Activated naive CD4-positive, alpha-beta T cell treated with anti-CD3 and anti-CD28 coated beads for 36 hours (primary cell): ENCODE measurements at regions of chr16 and their contacts with region 1.

Region 1: DNA sequence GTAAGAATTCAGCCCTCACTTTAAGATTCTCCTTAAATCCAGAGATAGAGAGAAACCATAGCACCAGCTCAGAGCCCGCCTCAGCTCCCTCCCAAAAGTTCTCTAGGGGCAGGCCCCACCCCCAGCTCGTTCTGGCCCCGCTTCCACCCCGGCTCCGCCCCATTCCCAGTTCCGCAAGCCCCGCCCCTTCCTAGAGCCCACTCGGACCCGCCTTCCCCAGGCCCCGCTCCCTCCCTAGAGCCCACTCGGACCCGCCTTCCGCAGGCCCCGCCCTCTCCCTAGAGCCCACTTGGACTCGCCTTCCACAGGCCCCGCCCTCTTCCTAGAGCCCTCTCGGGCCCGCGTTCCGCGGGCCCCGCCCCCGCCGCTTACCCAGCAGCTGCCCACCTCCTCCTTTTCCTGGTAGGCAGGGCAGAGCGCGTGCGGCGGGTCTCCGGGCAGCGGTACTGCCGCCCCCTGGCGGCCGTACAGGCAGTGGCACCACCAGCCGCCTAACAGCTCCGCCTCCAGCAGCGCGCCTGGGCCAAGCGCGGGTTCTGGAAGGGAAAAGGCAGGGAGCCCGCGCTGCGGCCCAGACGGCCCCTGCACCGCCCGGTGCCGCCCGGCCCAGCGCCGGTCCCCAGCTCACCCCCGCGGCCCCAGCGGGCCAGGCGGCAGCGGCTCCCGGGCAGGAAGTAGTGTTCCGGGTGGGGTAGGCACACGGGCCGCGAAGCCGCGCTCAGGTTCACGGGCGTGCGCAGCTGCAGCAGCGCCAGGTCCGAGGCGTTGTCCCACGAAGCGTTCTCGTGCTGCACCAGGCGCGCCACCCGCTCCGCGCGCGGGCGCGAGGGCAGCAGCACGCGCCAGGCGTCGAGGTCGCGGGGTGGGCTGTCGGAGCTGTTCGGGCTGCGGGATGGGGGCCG is 6.8 kb upstream of the PRSS8 start:
- DNase-seq: peak; percentile 99
- H3K4me3 Mint-ChIP-seq: peak overlapping the region; percentile 64
- H3K27ac Mint-ChIP-seq: peak overlapping the region; percentile 84
- H3K4me1 Mint-ChIP-seq: peaks cover 12% of the 10 kb centered on the region
- H3K27me3 Mint-ChIP-seq: no peaks in the 10 kb centered on the region

Region 2: DNA sequence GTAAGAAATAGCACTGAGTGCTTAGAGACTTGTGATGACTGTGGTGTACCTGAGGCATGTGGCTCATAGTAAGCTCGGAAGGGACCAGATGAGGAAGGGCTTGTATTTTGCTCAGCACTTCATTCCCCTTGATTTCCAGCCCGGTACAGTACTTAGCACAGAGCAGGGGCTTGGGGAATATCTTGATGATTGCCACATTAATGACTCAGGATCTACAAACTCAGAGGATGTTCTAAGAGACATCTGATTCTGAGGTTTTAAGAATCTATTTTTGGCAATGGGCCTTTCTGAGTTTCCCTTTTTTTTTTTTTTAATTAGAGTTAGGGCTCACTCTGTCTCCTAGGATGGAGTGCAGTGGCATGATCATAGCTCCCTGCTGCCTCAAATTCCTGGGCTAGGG is 1233.0 kb before region 1 on chr16:
- CTCF ChIA-PET with region 1: no interaction called
- intact Hi-C with region 1: no loop called
- DNase-seq: no peak
- H3K4me3 Mint-ChIP-seq: no peak overlapping the region
- H3K27ac Mint-ChIP-seq: no peak overlapping the region
- H3K4me1 Mint-ChIP-seq: no peaks in the 10 kb centered on the region
- H3K27me3 Mint-ChIP-seq: no peaks in the 10 kb centered on the region

Region 3: DNA sequence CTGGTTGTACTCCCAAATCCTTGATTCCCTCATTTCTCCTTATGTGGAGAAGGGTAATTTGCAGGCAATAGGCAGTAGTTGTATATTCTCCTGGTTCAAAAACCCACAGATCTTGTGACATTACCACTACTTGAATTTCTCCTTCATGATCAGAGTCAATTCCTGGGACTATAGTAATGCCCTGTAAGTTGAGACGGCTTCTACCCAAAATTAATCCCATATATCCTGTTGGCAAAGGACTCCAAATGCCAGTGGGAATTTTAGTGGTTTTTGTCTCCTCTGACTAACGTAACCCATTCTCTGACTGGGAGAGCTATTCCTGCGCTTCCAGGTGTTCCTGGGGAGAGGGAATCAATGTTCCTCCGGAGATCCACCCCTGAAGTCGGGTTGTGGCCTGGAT is 520.6 kb before region 1 on chr16:
- CTCF ChIA-PET with region 1: no interaction called
- intact Hi-C with region 1: no loop called
- DNase-seq: no peak
- H3K4me3 Mint-ChIP-seq: no peak overlapping the region
- H3K27ac Mint-ChIP-seq: no peak overlapping the region
- H3K4me1 Mint-ChIP-seq: no peaks in the 10 kb centered on the region
- H3K27me3 Mint-ChIP-seq: no peaks in the 10 kb centered on the region

Region 4: DNA sequence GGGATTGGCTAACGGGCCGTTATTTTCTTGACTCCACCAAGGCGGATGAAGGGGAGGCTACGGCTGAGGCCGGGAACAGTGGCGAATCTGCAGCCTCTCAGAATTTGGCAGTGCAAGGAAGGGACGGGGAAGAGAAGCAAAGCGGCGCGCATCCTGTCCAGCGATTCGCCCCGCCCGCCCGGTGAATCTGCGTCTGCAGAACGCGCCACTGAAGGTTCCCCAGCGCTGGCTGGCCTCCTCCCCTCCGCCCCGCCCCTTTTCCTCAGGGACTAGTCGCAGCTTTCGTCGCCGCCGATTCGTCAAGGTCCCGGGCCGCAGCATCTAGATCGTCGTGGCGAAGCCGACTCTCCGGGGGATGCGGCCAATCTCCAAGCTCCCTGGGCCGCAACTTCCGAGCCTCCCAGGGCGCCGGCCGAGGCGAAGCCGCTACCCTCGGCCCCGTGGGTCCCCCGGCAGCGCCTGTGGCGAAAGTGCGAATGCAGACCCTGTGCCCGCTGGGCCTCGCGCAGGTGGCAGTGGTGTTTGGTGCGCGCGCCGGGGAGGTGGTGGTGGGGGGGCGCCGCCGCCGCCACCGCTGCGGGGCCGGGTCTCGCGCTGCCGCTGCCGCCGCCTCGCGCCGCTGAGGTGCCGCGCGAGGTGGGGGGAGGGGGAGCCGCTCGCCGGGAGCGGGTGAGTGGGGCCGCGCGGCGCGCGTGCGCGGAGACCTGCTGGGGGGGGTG is 184.7 kb before region 1 on chr16 and contains the start of gene SETD1A:
- CTCF ChIA-PET with region 1: interaction called, 7 read pairs
- intact Hi-C with region 1: loop called (anchors 1 kb)
- DNase-seq: peak; percentile 99
- H3K4me3 Mint-ChIP-seq: peak within 1 kb of the TSS; percentile 93
- H3K27ac Mint-ChIP-seq: peak within 1 kb of the TSS; percentile 99
- H3K4me1 Mint-ChIP-seq: peaks cover 27% of the 10 kb centered on the region
- H3K27me3 Mint-ChIP-seq: no peaks in the 10 kb centered on the region
- total RNA-seq, gene SETD1A: 14.3 to 14.6 TPM

Region 5: GRCh38 chr16:30997000-30997886 is 145.1 kb before region 1 on chr16:
- CTCF ChIA-PET with region 1: interaction called, 3 read pairs
- intact Hi-C with region 1: loop called (anchors 1 kb)
- DNase-seq: peak; percentile 86
- H3K4me3 Mint-ChIP-seq: peak overlapping the region; percentile 73
- H3K27ac Mint-ChIP-seq: no peak overlapping the region
- H3K4me1 Mint-ChIP-seq: peaks cover 11% of the 10 kb centered on the region
- H3K27me3 Mint-ChIP-seq: no peaks in the 10 kb centered on the region

Region 6: GRCh38 chr16:31052124-31052523 is 90.2 kb before region 1 on chr16:
- CTCF ChIA-PET with region 1: no interaction called
- intact Hi-C with region 1: no loop called
- DNase-seq: no peak
- H3K4me3 Mint-ChIP-seq: no peak overlapping the region
- H3K27ac Mint-ChIP-seq: no peak overlapping the region
- H3K4me1 Mint-ChIP-seq: no peaks in the 10 kb centered on the region
- H3K27me3 Mint-ChIP-seq: peaks cover 2% of the 10 kb centered on the region

Region 7: DNA sequence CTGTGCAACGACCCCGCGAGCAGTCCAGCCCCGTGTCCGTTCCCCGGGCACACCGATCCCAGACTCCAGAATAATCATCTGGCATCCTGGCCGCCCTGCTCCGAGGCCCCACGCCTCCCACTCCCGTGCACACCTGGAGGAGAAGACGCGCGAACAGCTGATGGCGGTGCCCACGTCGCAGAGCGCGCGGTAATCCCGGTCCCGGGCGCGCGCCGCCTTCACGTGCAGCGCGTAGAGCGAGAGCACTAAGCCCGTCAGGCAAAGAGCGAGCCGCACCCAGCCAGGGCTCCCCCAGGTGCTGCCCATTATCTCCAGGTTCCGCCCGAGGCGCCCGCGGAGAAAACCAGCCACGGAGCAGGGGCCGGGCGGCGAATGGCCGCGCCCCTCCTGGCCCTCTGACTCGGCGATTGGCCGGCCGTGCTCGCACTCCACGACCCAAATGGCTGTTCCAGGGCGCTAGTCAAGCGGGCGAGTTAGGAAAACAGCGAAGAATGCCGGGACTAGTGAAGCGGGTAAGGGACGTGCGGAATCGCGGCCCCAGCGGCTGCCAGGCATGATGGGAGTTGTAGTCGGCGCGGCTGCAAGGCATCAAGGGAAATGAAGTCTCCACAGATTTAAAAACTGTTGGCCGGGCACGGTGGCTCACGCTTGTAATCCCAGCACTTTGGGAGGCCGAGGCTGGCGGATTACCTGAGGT is 47.8 kb before region 1 on chr16 and contains the start of gene VKORC1:
- CTCF ChIA-PET with region 1: interaction called, 4 read pairs
- intact Hi-C with region 1: loop called (anchors 1 kb)
- DNase-seq: peak; percentile 95
- H3K4me3 Mint-ChIP-seq: peak within 1 kb of the TSS; percentile 89
- H3K27ac Mint-ChIP-seq: peak within 1 kb of the TSS; percentile 83
- H3K4me1 Mint-ChIP-seq: peaks cover 31% of the 10 kb centered on the region
- H3K27me3 Mint-ChIP-seq: no peaks in the 10 kb centered on the region
- total RNA-seq, gene VKORC1: 43.4 to 47.8 TPM

Region 8: DNA sequence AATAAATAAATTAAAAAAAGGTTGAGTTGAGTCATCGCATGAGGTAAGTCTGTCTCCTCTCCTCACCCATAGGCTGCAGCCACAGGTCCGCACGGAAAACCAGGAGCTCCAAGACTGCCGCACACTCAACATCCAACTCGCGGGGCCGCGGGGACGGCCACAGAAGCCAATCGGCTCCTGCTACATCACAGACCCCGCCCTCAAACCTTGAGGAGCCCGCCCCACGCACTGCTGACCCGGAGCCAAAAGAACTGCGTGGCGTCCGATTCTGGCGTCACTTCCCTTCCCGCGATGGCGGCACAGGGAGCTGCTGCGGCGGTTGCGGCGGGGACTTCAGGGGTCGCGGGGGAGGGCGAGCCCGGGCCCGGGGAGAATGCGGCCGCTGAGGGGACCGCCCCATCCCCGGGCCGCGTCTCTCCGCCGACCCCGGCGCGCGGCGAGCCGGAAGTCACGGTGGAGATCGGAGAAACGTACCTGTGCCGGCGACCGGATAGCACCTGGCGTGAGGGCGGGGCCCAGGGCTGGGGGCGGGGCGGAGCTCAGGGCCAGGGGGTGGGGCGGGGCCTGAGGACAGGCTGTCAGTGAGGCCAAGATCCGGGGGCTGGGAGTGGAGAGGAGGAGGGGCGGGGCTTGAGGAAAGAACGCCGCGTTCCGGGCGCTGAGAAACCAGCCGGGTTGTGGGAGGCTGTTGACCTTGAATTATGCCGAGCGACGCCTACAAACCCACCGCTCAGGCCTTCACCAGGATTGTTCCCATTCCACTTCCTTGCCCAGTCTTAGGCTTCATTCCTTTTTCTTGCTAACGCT is 24.8 kb before region 1 on chr16 and contains the start of gene KAT8:
- CTCF ChIA-PET with region 1: interaction called, 20 read pairs
- intact Hi-C with region 1: loop called (anchors 1 kb)
- DNase-seq: peak; percentile 99
- H3K4me3 Mint-ChIP-seq: peak within 1 kb of the TSS; percentile 82
- H3K27ac Mint-ChIP-seq: peak within 1 kb of the TSS; percentile 70
- H3K4me1 Mint-ChIP-seq: peaks cover 28% of the 10 kb centered on the region
- H3K27me3 Mint-ChIP-seq: no peaks in the 10 kb centered on the region
- total RNA-seq, gene KAT8: 58.1 to 64.5 TPM